ENCODE measurements at regions of chr2 and their contacts with region 1.

Region 1: DNA sequence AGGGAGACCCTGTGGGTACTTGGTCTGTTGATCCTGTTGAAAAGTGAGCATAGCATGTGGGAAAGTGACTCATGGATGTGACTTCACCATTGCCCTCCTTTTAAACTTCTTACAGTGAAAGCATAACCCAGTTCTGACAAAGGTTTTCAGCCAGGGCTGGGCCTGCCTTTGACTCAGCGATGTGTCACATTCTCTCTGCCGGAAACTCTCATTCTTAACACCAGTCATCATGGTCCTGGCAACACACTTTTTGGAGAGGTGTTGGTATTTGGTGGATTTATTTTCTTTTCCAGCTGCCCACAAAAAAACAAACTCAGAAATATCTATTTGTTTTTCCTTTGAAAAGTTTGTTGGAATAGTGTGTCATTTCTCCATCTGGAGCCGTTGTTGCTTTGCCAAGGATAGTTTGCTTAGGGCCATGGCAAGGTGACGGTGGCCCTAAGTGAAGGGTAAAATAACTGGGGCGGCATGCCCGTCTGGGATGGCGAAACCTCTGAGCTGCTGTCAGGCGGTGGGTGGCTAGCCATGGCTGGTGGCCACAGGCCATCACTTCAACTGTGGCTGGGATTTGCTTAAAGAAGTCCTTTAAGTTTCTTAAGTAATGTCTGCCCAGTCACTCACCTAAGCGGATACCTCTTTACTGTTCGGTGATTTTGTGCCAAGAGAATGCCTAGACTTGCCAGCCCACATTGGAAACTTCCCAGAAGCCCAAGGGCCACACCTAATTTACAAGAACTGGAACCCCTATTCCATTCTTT is 123.3 kb downstream of the LTBP1 start:
- DNase-seq: peak; percentile 98
- H3K4me3 ChIP-seq: peak overlapping the region; percentile 18 to 37 (median 21)
- H3K27ac ChIP-seq: peak overlapping the region; percentile 99
- H3K4me1 ChIP-seq: peaks cover 43% of the 10 kb centered on the region
- H3K27me3 ChIP-seq: no peaks in the 10 kb centered on the region
- CTCF ChIP-seq: no peak

Region 2: GRCh38 chr2:32865399-32866068 is 204.5 kb before region 1 on chr2:
- CTCF ChIA-PET with region 1: no interaction called
- dilution Hi-C with region 1: no loop called
- in situ Hi-C with region 1: no loop called
- intact Hi-C with region 1: no loop called
- DNase-seq: peak; percentile 90
- H3K4me3 ChIP-seq: no peak overlapping the region
- H3K27ac ChIP-seq: peak overlapping the region; percentile 47
- H3K4me1 ChIP-seq: peaks cover 8% of the 10 kb centered on the region
- H3K27me3 ChIP-seq: no peaks in the 10 kb centered on the region
- CTCF ChIP-seq: no peak

Region 3: GRCh38 chr2:33153008-33153407 is 82.9 kb after region 1 on chr2:
- CTCF ChIA-PET with region 1: no interaction called
- dilution Hi-C with region 1: no loop called
- in situ Hi-C with region 1: no loop called
- intact Hi-C with region 1: loop called (anchors 5 kb)
- DNase-seq: peak; percentile 83
- H3K4me3 ChIP-seq: no peak overlapping the region
- H3K27ac ChIP-seq: peak overlapping the region; percentile 91
- H3K4me1 ChIP-seq: peaks cover 25% of the 10 kb centered on the region
- H3K27me3 ChIP-seq: no peaks in the 10 kb centered on the region
- CTCF ChIP-seq: no peak

Region 4: GRCh38 chr2:33321236-33321771 is 251.2 kb after region 1 on chr2:
- CTCF ChIA-PET with region 1: no interaction called
- dilution Hi-C with region 1: no loop called
- in situ Hi-C with region 1: no loop called
- intact Hi-C with region 1: no loop called
- DNase-seq: peak; percentile 34
- H3K4me3 ChIP-seq: no peak overlapping the region
- H3K27ac ChIP-seq: no peak overlapping the region
- H3K4me1 ChIP-seq: peaks cover 9% of the 10 kb centered on the region
- H3K27me3 ChIP-seq: no peaks in the 10 kb centered on the region
- CTCF ChIP-seq: no peak